Lower leg skin (tissue), 4 donors: ENCODE measurements at regions of chr20 and their contacts with region 1.

Region 1: DNA sequence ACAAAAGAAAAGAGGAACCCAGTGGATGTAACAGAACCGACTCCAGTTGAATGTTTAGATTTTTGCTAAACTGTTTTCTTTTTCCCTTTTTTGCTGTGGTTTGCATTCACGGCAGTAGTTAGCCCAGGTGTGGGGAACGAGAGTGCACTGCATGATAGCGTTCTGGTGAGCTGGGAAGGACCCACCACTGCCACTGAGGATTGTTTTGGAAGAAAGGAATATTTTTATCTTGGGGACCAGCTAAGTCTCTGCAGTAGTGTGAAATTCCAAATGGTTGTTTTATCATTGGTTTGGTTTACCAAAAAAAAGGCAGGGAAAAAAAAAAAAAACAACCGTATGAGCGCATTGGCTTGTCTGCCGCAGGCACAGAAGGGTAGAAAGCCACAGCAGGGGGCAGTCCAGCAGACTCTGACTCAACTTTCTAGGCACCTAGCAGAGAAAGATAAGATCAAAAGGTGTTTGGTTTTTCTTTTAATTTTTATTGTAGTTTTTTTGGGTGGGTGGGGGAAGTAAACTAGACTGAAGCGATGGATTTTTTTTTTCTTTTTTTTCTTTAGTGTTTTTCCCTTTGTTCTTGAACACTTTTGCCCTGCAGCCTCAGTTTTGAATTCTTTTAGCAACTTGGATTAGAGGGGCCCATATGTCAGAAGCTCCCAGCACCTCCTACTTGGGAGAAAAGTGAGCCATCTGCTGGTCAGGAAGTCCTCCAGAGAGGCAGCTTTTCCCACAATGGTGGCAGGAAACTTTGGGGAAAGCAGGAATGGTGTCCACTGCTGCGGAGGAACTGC is 13.5 kb upstream of the RAB5IF start:
- DNase-seq: no peak
- H3K4me3 ChIP-seq: no peak overlapping the region
- CTCF ChIP-seq: no peak
- POLR2A ChIP-seq: no peak

Region 2: DNA sequence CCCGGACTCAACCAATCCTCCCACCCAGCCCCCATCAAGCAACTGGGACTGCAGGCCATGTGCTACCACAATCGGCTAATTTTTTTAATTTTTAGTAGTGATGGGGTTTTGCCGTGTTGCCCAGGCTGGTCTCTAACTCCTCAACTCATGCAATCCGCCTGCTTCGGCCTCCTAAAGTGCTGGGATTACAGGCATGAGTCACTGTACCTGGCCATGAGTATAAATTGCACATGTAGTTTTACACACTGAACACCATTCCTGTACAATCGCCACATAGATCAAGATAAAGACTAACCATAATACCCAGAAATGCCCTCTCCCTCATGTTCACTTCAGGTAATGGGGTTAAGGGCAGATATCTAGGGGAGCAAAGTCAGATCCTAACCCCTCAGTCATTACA is 1525.9 kb before region 1 on chr20:
- intact Hi-C with region 1: loop called (anchors 5 kb)
- DNase-seq: no peak
- H3K4me3 ChIP-seq: no peak overlapping the region
- CTCF ChIP-seq: no peak
- POLR2A ChIP-seq: no peak

Region 3: GRCh38 chr20:36613974-36614373 is 21.9 kb after region 1 on chr20:
- intact Hi-C with region 1: no loop called
- DNase-seq: no peak
- H3K4me3 ChIP-seq: no peak overlapping the region
- CTCF ChIP-seq: no peak
- POLR2A ChIP-seq: no peak